ENCODE measurements at regions of chr6 and their contacts with region 1.

Region 1: DNA sequence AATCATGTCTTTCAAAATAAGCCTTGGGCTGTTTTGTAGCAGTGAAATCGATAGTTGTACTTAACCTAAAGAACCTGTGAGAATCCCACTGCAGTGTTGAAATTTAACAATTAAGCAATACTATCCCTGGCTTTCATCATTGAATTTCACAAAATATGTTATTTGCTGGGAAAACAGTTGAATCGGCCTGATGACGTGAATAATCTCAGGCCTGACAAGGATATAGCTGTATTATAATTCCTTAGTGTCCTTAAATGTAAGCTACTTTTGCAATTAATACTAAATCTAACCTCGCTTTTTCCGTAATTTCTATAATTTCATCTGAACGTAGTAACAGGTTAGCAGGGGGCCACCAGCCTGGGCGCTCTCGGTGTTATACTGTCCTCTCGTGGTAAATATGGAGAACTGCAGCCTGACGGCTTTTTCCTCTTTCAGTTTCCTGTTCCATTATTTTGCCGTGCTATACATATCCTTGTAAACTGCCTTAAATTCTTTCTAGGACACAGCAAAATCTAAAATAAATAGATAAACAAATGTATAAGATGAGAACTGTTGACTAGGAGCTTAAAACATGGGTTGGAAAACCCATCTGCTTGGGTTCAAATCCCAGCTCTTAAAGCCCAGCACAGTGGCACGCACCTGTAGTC is 24.0 kb downstream of the MTFR2 start:
- DNase-seq: peak; percentile 74
- ATAC-seq: peak; percentile 93
- H3K4me3 Mint-ChIP-seq: no peak overlapping the region
- H3K27ac Mint-ChIP-seq: no peak overlapping the region
- H3K4me1 Mint-ChIP-seq: peaks cover 9% of the 10 kb centered on the region
- H3K27me3 Mint-ChIP-seq: no peaks in the 10 kb centered on the region
- CTCF ChIP-seq: peak; percentile 100

Region 2: GRCh38 chr6:135506270-135506997 is 719.7 kb before region 1 on chr6:
- CTCF ChIA-PET with region 1: interaction called, 8 read pairs
- POLR2A ChIA-PET with region 1: no interaction called
- intact Hi-C with region 1: loop called (anchors 5 kb)
- DNase-seq: peak; percentile 54
- ATAC-seq: peak; percentile 89
- H3K4me3 Mint-ChIP-seq: peak overlapping the region; percentile 35
- H3K27ac Mint-ChIP-seq: peak overlapping the region; percentile 69
- H3K4me1 Mint-ChIP-seq: peaks cover 9% of the 10 kb centered on the region
- H3K27me3 Mint-ChIP-seq: no peaks in the 10 kb centered on the region
- CTCF ChIP-seq: peak; percentile 77

Region 3: GRCh38 chr6:135680964-135681913 is 544.9 kb before region 1 on chr6:
- CTCF ChIA-PET with region 1: interaction called, 14 read pairs
- POLR2A ChIA-PET with region 1: no interaction called
- intact Hi-C with region 1: loop called (anchors 5 kb)
- DNase-seq: no peak
- ATAC-seq: no peak
- H3K4me3 Mint-ChIP-seq: no peak overlapping the region
- H3K27ac Mint-ChIP-seq: no peak overlapping the region
- H3K4me1 Mint-ChIP-seq: peaks cover 3% of the 10 kb centered on the region
- H3K27me3 Mint-ChIP-seq: peaks cover 5% of the 10 kb centered on the region
- CTCF ChIP-seq: no peak

Region 4: GRCh38 chr6:135789375-135790050 is 436.6 kb before region 1 on chr6:
- CTCF ChIA-PET with region 1: no interaction called
- POLR2A ChIA-PET with region 1: no interaction called
- intact Hi-C with region 1: no loop called
- DNase-seq: no peak
- ATAC-seq: no peak
- H3K4me3 Mint-ChIP-seq: no peak overlapping the region
- H3K27ac Mint-ChIP-seq: no peak overlapping the region
- H3K4me1 Mint-ChIP-seq: peaks cover 2% of the 10 kb centered on the region
- H3K27me3 Mint-ChIP-seq: no peaks in the 10 kb centered on the region
- CTCF ChIP-seq: no peak

Region 5: GRCh38 chr6:136031982-136032381 is 194.2 kb before region 1 on chr6:
- CTCF ChIA-PET with region 1: interaction called, 9 read pairs
- POLR2A ChIA-PET with region 1: no interaction called
- intact Hi-C with region 1: loop called (anchors 10 kb)
- DNase-seq: peak; percentile 38
- ATAC-seq: peak; percentile 39
- H3K4me3 Mint-ChIP-seq: no peak overlapping the region
- H3K27ac Mint-ChIP-seq: no peak overlapping the region
- H3K4me1 Mint-ChIP-seq: peaks cover 5% of the 10 kb centered on the region
- H3K27me3 Mint-ChIP-seq: no peaks in the 10 kb centered on the region
- CTCF ChIP-seq: peak; percentile 53

Region 6: GRCh38 chr6:136582711-136583471 is 356.7 kb after region 1 on chr6:
- CTCF ChIA-PET with region 1: no interaction called
- POLR2A ChIA-PET with region 1: no interaction called
- intact Hi-C with region 1: no loop called
- DNase-seq: no peak
- ATAC-seq: no peak
- H3K4me3 Mint-ChIP-seq: no peak overlapping the region
- H3K27ac Mint-ChIP-seq: no peak overlapping the region
- H3K4me1 Mint-ChIP-seq: no peaks in the 10 kb centered on the region
- H3K27me3 Mint-ChIP-seq: no peaks in the 10 kb centered on the region
- CTCF ChIP-seq: peak; percentile 76

Measured in activated CD8-positive, alpha-beta T cell treated with anti-CD3 and anti-CD28 coated beads for 36 hours (primary cell).